A673 (cell line): ENCODE measurements at regions of chr1 and their contacts with region 1.

Region 1: GRCh38 chr1:109532365-109533136 is 7.1 kb upstream of the GPR61 start:
- DNase-seq: peak; percentile 85
- H3K4me3 ChIP-seq: no peak overlapping the region
- H3K27ac ChIP-seq: no peak overlapping the region
- H3K4me1 ChIP-seq: peaks cover 8% of the 10 kb centered on the region
- H3K27me3 ChIP-seq: no peaks in the 10 kb centered on the region
- CTCF ChIP-seq: peak; percentile 92

Region 2: GRCh38 chr1:109263597-109264398 is 268.8 kb before region 1 on chr1:
- CTCF ChIA-PET with region 1: no interaction called
- POLR2A ChIA-PET with region 1: no interaction called
- intact Hi-C with region 1: loop called (anchors 5 kb)
- DNase-seq: peak; percentile 48
- H3K4me3 ChIP-seq: no peak overlapping the region
- H3K27ac ChIP-seq: no peak overlapping the region
- H3K4me1 ChIP-seq: no peaks in the 10 kb centered on the region
- H3K27me3 ChIP-seq: no peaks in the 10 kb centered on the region
- CTCF ChIP-seq: peak; percentile 97

Region 3: DNA sequence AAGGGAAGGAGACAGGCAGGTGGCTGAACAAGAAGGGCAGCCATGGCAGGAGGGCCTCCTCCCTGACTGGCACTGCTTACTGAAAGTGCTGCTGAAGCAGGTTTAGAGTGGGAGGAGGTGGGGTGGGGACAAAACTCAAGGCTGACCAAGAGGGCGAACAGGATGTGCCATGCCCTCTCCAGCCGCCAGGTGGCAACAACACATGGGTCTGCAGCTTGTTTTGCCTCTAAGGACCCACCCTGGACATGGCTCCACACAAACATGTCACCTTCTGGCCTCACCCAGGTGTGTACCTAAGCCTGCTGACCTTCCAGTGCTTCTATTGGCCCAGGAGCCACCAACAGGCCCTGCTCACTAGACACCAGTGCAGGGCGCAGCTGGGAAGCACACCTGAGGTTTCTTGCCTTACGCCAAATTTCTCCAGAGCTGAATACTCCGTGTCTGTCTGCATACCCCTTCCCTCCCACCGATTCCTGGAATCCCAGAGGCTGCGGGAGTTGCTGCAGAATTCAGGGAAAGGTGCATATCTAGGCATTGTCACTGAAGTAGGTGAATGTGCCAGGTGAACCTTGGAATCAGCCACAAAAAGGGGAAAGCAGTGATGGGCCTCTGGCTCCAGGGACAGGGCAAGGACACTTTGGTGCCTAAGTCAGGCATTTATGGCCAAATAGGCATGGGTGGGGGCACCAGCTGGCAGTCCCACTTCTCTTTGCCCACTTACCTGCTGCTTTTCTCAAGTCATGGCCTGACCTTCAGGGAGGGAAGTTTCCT is 254.9 kb before region 1 on chr1:
- CTCF ChIA-PET with region 1: interaction called, 6 read pairs
- POLR2A ChIA-PET with region 1: no interaction called
- intact Hi-C with region 1: loop called (anchors 1 kb)
- DNase-seq: peak; percentile 71
- H3K4me3 ChIP-seq: no peak overlapping the region
- H3K27ac ChIP-seq: no peak overlapping the region
- H3K4me1 ChIP-seq: peaks cover 10% of the 10 kb centered on the region
- H3K27me3 ChIP-seq: no peaks in the 10 kb centered on the region
- CTCF ChIP-seq: peak; percentile 96

Region 4: DNA sequence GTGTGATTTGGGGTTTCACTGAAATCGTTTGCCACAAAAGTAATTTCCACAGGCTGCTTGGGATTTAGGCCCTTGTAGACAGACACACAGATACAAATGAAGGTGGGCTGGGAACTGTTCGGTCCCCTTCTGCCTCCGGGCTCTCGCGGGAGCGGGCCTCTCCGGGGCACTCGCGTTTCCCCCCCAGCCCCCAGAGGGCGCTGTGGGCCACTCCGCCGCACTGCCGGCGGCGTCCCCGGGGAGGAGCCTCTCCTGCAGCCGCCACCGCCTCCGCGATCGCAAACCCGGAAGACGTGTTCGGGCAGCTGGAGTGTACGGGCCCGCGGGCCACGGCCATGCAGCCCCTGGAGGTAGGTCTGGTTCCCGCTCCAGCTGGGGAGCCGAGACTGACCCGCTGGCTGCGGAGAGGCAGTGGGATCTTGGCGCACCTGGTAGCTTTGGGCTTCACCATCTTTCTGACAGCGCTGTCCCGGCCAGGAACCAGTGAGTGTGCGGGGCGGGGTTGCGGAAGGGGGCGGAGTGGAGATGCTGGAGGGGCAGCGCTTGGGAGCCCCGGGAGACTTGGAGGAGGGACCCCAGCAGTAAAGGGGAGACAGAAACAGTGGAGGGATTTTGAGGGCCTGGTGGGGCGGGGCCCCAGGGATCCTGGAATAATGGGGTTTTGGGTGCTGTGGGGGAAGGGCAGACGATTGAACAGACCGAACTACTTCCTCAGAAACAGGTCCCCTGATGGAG is 38.6 kb before region 1 on chr1 and contains the start of gene CYB561D1:
- CTCF ChIA-PET with region 1: interaction called, 28 read pairs
- POLR2A ChIA-PET with region 1: no interaction called
- intact Hi-C with region 1: loop called (anchors 1 kb)
- DNase-seq: peak; percentile 93
- H3K4me3 ChIP-seq: peak within 1 kb of the TSS; percentile 79
- H3K27ac ChIP-seq: no peak within 1 kb of the TSS
- H3K4me1 ChIP-seq: no peaks in the 10 kb centered on the region
- H3K27me3 ChIP-seq: no peaks in the 10 kb centered on the region
- CTCF ChIP-seq: peak; percentile 98
- total RNA-seq, gene CYB561D1: 5.7 and 7.3 TPM in 2 replicates

Region 5: GRCh38 chr1:109499661-109500536 is 32.7 kb before region 1 on chr1:
- CTCF ChIA-PET with region 1: interaction called, 28 read pairs
- POLR2A ChIA-PET with region 1: no interaction called
- intact Hi-C with region 1: loop called (anchors 2 kb)
- DNase-seq: peak; percentile 44
- H3K4me3 ChIP-seq: no peak overlapping the region
- H3K27ac ChIP-seq: no peak overlapping the region
- H3K4me1 ChIP-seq: no peaks in the 10 kb centered on the region
- H3K27me3 ChIP-seq: no peaks in the 10 kb centered on the region
- CTCF ChIP-seq: peak; percentile 60

Region 6: DNA sequence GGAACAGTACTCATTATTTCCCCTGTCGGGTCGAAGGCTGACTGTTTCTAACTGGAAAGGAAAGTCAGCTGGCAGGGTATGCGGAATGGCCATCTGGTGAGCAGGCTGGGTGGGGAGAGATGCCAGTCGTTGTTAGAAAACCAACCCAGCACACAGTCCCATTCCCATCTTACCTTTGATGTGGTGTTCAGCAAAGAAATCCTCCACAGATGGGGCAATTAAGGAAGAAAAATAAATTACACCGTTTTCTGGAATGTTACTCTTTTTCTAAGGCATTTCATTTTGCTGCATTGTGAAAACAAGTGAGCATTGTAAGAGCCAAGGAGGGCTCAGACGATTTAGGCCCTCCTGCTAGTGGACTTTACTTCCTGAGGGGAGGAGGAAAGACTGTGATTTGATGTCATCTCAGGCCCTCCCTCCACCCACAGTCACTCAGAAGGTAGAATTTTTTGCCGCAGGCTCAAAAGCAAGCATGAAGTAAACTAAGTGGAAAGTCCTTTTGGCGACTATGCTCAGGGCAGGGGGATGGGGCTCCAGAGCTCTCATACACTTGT is 858.2 kb after region 1 on chr1 and contains the start of gene SLC16A4:
- CTCF ChIA-PET with region 1: no interaction called
- POLR2A ChIA-PET with region 1: no interaction called
- intact Hi-C with region 1: no loop called
- DNase-seq: no peak
- H3K4me3 ChIP-seq: no peak within 1 kb of the TSS
- H3K27ac ChIP-seq: no peak within 1 kb of the TSS
- H3K4me1 ChIP-seq: no peaks in the 10 kb centered on the region
- H3K27me3 ChIP-seq: no peaks in the 10 kb centered on the region
- CTCF ChIP-seq: no peak
- total RNA-seq, gene SLC16A4: 0.48 and 0.60 TPM in 2 replicates